Sciatic nerve (tissue), 2 donors: ENCODE measurements at regions of chr1 and their contacts with region 1.

Region 1: DNA sequence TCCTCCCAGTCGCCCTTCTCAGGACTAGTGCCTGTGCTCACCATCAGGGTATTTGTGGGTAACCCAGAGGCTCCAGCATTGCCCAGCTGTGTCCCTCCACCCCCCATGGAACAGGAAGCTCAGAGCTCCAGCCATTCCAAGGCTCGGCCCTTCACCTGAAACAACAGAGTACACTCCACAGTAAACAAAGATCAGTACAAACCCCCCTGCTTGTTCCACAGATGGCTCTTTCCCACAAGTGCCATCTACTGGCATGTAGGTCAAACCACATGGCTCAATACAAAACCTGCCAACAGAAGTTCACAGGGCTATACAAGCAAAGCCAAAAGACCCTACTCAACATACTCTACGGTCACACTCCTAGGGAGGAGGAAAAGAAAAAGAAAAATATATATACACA is 258.7 kb downstream of the AGBL4 start:
- DNase-seq: no peak
- ATAC-seq: no peak

Region 2: DNA sequence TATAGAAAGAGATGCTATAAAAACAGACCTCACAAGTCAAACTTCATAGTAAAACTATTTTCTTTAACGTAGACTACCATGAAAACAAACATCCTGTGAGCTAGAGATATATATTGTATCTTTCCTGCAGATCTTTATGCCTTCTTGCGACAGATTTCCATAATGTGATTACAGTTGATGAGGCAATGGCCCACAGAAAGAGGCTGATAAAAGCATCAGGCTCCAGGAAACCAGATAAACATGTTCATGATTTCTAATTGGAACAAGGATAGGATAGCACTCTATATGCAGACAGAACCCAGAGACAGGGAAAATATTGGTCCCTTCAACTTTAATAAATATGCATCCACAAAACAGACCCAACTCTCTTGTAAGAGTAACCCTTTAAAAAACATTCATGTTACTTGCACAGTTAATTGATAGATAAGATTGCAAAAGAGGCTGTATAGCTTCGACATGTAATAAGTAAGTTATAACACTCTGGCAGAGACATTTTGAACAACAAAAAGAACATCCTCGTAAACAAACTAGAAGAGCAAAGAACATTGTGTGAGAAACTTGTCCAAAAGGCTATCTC is 70.7 kb before region 1 on chr1:
- intact Hi-C with region 1: loop called (anchors 2 kb)
- DNase-seq: no peak
- ATAC-seq: no peak

Region 3: DNA sequence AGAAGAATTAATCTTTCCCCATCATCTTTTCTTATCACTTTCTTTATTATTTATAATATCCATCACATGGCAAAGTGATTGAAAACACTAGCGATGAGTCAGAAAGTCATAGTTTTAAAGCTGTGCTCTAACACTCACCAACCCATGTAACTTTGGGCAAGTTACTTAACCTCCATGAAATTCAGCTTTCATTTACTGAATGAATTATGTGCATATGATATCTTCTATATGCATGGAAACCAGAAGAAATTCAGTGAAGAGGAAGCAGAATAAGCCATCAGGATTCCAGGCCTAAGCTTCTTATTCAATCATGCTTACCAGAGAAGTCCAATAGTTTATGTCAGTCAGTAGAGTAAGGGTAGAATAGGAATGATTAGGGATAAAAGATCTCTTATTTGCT is 41.4 kb before region 1 on chr1:
- intact Hi-C with region 1: no loop called
- DNase-seq: no peak
- ATAC-seq: no peak

Region 4: GRCh38 chr1:50193002-50193401 is 428.0 kb after region 1 on chr1:
- intact Hi-C with region 1: no loop called
- DNase-seq: no peak
- ATAC-seq: no peak